IMR-90 (cell line): ENCODE measurements at regions of chr15 and their contacts with region 1.

Region 1: DNA sequence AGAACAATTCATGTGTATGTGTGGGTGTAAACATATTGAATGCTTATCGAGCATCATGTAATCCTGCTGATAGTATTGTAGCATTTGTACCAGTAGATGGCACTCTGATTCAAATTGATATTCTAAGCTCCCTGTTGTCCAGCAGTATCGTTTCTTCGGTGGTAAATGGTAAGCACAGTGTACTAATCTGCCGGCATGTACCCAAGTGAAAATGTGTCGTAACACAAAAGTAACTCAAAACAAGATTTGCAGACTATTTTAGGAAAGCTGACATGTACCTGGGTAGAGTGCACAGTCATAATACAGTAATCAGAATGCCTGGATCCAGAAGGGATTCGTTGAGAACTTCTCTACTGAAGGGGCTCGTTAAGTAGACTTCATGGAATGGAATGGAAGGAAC is 31.7 kb upstream of the MNS1 start:
- DNase-seq: peak; percentile 79
- ATAC-seq: peak; percentile 96
- H3K4me3 ChIP-seq: no peak overlapping the region
- H3K27ac ChIP-seq: no peak overlapping the region
- H3K4me1 ChIP-seq: no peaks in the 10 kb centered on the region
- H3K27me3 ChIP-seq: peaks cover 29% of the 10 kb centered on the region
- CTCF ChIP-seq: peak; percentile 77
- POLR2A ChIP-seq: no peak
- RAD21 ChIP-seq: peak; percentile 81

Region 2: DNA sequence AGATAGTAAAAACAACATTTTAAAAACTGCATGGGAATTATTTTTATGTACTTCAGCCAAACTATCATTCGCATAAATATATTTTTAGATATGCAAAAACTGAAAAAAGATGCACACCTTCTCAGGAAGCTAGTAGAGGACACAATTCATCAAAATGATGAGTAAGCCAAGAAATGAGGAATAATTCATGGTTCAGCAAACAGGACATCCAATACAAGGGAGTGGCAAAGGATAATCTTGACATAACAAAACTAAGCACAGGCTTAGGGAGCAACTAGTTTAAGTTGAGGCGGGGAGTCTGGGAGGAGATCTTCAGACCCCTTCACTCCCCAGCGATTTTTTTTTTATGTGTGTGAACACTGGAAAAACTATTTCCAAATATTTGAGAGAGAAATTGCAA is 143.0 kb after region 1 on chr15:
- CTCF ChIA-PET with region 1: no interaction called
- POLR2A ChIA-PET with region 1: no interaction called
- dilution Hi-C with region 1: no loop called
- in situ Hi-C with region 1: no loop called
- intact Hi-C with region 1: loop called (anchors 5 kb)
- DNase-seq: no peak
- ATAC-seq: no peak
- H3K4me3 ChIP-seq: no peak overlapping the region
- H3K27ac ChIP-seq: no peak overlapping the region
- H3K4me1 ChIP-seq: peaks cover 2% of the 10 kb centered on the region; the same call in 1 of the 2 replicates
- H3K27me3 ChIP-seq: no peaks in the 10 kb centered on the region
- CTCF ChIP-seq: no peak
- POLR2A ChIP-seq: no peak
- RAD21 ChIP-seq: no peak

Region 3: DNA sequence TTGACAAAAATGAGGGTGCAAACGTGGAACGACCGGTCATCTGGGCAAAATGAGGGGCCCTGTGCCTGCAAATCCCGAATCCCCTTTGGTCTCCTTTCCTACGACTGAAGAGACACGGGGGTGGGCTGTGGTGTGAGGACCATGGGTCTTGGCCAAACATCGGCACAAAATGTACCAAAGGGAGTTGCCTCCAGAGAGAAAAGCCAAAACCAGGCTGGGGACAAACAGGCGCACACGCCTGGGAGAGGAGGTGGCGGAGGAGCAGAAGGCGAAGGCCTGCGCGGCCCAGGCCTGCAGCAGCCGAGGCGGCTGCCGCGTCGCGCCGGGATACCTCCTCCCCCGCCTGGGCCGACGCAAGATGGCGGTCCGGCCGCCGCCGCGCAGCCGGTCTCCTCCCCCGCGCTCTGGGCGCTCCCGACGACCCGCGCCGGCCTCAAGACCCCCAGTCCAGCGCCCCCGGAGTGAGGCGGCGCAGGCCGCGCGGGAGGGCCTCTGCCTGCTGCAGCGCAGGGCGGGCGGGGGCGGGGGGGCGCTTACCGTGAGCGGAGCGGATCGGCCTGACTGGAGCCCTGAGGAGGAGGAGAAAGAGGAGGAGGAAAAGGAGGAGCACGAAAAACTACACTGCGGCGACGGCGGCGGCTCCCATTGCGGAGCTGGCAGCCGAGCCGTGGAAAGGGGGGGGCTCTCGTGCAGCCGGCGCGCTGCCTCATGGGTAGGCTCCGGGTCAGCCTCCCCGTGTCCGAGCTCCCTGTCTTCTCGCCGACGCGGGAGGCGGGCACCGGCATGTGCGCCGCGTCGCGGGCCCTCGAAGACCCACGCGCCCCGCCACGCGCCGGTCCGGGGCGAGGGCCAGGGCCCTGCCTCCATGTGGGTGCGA is 236.5 kb after region 1 on chr15 and contains the start of gene ZNF280D:
- CTCF ChIA-PET with region 1: interaction called, 4 read pairs
- POLR2A ChIA-PET with region 1: no interaction called
- dilution Hi-C with region 1: no loop called
- in situ Hi-C with region 1: no loop called
- intact Hi-C with region 1: loop called (anchors 2 kb)
- DNase-seq: peak; percentile 85
- ATAC-seq: peak; percentile 92
- H3K4me3 ChIP-seq: peak within 1 kb of the TSS; percentile 87
- H3K27ac ChIP-seq: peak within 1 kb of the TSS; percentile 94
- H3K4me1 ChIP-seq: peaks cover 4% of the 10 kb centered on the region
- H3K27me3 ChIP-seq: no peaks in the 10 kb centered on the region
- CTCF ChIP-seq: no peak
- POLR2A ChIP-seq: peak; percentile 75
- RAD21 ChIP-seq: no peak
- total RNA-seq, gene ZNF280D: 21.0 and 28.6 TPM in 2 replicates

Region 4: DNA sequence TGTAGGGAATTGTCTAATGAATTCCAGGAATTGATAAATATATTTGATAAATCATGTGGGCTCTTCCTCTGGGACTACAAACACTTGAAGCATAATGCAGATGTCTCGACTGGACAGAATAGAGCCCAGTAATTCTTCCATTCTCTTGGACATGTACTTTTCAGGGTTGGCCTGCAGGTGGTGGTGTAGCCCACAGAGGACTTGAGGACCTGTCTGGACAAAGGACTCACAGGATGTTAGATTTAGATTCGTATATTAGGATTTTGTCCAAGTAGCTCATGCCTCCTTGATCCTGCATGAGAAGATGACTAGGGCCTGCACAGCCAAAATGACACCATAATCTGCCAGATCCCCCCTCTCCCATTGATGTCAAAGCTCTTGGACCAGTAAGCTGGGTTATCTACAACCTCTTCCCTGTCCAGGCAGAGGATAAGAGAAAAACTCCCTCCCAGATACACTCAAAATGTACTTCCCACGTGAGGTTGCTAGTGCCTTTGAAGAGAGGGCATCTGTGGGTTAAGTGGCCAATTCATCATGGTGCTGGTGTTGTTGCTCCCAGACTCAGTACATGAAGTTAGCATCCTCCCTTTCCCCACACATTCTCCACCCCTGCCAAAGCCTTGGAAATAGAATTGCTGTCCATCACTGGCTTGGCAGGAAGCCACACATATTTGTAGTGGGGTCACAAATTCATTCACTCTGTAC is 325.2 kb after region 1 on chr15:
- CTCF ChIA-PET with region 1: interaction called, 3 read pairs
- POLR2A ChIA-PET with region 1: no interaction called
- dilution Hi-C with region 1: no loop called
- in situ Hi-C with region 1: no loop called
- intact Hi-C with region 1: loop called (anchors 5 kb)
- DNase-seq: peak; percentile 77
- ATAC-seq: peak; percentile 95
- H3K4me3 ChIP-seq: no peak overlapping the region
- H3K27ac ChIP-seq: no peak overlapping the region
- H3K4me1 ChIP-seq: peaks cover 6% of the 10 kb centered on the region
- H3K27me3 ChIP-seq: no peaks in the 10 kb centered on the region
- CTCF ChIP-seq: peak; percentile 79
- POLR2A ChIP-seq: no peak
- RAD21 ChIP-seq: peak; percentile 85

Region 5: DNA sequence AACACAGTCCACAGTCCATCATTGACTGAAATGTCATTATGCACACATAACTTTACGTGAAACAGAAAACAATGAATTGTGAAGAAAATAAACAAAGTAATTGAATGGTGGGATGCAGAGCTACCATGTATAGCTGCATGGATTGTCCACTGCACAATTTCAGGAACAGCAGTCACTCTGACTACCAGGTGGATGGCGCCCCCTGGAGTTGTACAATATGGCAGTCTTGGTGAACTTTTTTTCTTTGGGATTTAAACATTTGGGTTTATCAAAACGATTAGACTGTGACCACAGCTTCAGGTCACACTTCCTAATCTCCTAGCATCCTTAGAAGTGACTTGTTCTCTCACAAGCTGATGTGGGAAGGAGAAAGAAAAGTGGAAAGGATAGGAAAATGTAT is 372.9 kb after region 1 on chr15:
- CTCF ChIA-PET with region 1: interaction called, 10 read pairs
- POLR2A ChIA-PET with region 1: no interaction called
- dilution Hi-C with region 1: no loop called
- in situ Hi-C with region 1: no loop called
- intact Hi-C with region 1: loop called (anchors 1 kb)
- DNase-seq: no peak
- ATAC-seq: no peak
- H3K4me3 ChIP-seq: no peak overlapping the region
- H3K27ac ChIP-seq: no peak overlapping the region
- H3K4me1 ChIP-seq: peaks cover 7% of the 10 kb centered on the region
- H3K27me3 ChIP-seq: no peaks in the 10 kb centered on the region
- CTCF ChIP-seq: peak; percentile 52
- POLR2A ChIP-seq: no peak
- RAD21 ChIP-seq: peak; percentile 65

Region 6: GRCh38 chr15:57003418-57003817 is 506.8 kb after region 1 on chr15:
- CTCF ChIA-PET with region 1: no interaction called
- POLR2A ChIA-PET with region 1: no interaction called
- dilution Hi-C with region 1: no loop called
- in situ Hi-C with region 1: no loop called
- intact Hi-C with region 1: loop called (anchors 5 kb)
- DNase-seq: peak; percentile 93
- ATAC-seq: peak; percentile 86
- H3K4me3 ChIP-seq: no peak overlapping the region
- H3K27ac ChIP-seq: no peak overlapping the region; the same call in 1 of the 2 replicates
- H3K4me1 ChIP-seq: peaks cover 5% of the 10 kb centered on the region; the same call in 1 of the 2 replicates
- H3K27me3 ChIP-seq: no peaks in the 10 kb centered on the region
- CTCF ChIP-seq: no peak
- POLR2A ChIP-seq: no peak
- RAD21 ChIP-seq: no peak